AG04449 (cell line): ENCODE measurements at regions of chr1 and their contacts with region 1.

Region 1: DNA sequence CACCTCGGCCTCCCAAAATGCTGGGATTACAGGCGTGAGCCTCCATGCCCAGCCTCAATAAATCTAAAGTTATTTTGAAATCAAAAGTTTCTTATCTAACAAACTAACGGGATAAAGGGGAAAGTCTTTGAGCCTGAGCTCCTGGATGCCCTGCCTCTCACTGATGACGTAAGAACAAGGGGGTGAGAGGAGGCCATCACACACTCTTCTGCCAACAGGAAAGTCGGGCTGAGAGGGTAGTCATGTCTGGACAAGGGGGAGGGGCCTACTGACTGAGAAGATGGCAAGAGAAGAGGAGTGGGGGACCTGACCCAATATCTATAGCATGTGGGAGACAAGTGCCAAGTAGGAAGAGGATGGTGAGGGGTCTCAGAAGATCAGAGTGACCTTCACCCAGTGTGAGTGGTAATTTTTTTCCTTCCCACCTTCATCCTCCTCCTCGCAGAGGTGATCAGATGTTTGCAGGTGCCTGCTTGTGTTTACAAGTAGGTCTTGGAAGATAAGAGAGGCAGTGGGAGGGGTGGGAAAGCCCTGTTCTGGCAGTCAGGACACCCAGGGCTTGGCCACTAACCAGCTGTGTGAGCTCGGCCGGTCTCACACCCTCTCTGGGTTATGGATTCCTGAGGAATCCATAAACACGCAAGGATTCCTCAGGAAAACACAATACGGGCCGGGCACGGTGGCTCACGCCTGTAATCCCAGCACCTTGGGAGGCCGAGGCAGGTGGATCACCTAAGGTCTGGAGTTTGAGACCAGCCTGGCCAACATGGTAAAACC is 9.6 kb downstream of the UQCRHL start:
- DNase-seq: no peak
- H3K4me3 ChIP-seq: no peak overlapping the region
- CTCF ChIP-seq: no peak

Region 2: GRCh38 chr1:15826810-15827507 is 29.2 kb after region 1 on chr1:
- CTCF ChIA-PET with region 1: no interaction called
- POLR2A ChIA-PET with region 1: no interaction called
- DNase-seq: no peak
- H3K4me3 ChIP-seq: no peak overlapping the region
- CTCF ChIP-seq: no peak

Region 3: GRCh38 chr1:15957228-15958095 is 159.7 kb after region 1 on chr1:
- CTCF ChIA-PET with region 1: interaction called, 11 read pairs
- POLR2A ChIA-PET with region 1: no interaction called
- DNase-seq: no peak
- H3K4me3 ChIP-seq: no peak overlapping the region
- CTCF ChIP-seq: peak; percentile 51